ENCODE measurements at regions of chr19 and their contacts with region 1.

Region 1: DNA sequence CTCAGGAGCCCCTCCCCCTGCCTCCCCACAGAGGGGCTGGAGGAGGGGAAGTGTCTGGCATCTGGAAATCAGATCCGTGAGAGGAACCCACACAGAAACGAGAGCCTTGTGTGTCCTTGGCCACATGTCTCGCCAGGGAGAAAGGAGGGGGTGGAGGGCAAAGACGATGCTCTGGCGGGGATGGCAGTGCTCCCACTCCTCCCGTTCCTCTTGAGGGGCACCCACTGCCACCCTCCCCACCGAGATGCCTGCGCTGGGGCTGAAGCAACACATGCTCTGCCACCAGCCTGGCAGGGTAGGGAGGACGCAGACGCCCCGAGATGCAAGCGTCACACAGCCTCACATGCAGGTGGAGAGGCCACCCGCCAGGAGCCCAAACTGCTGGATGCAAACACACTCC is 2.8 kb downstream of the ADGRL1 start:
- DNase-seq: no peak
- H3K4me3 ChIP-seq: no peak overlapping the region
- H3K27ac ChIP-seq: no peak overlapping the region
- H3K4me1 ChIP-seq: peaks cover 4% of the 10 kb centered on the region
- H3K27me3 ChIP-seq: no peaks in the 10 kb centered on the region
- CTCF ChIP-seq: no peak
- POLR2A ChIP-seq: no peak

Region 2: GRCh38 chr19:14117668-14118164 is 85.5 kb before region 1 on chr19 and contains the start of gene PRKACA:
- intact Hi-C with region 1: no loop called
- DNase-seq: peak in 1 of 2 donors; percentile 100
- H3K4me3 ChIP-seq: peak within 1 kb of the TSS; percentile 95 to 99
- H3K27ac ChIP-seq: peak within 1 kb of the TSS; percentile 98
- H3K4me1 ChIP-seq: peaks cover 66% of the 10 kb centered on the region
- H3K27me3 ChIP-seq: no peaks in the 10 kb centered on the region
- CTCF ChIP-seq: no peak
- POLR2A ChIP-seq: peak in 1 of 2 donors; percentile 74
- total RNA-seq, gene PRKACA: 28.0 TPM

Region 3: GRCh38 chr19:14271840-14272239 is 68.7 kb after region 1 on chr19:
- intact Hi-C with region 1: no loop called
- DNase-seq: no peak
- H3K4me3 ChIP-seq: no peak overlapping the region
- H3K27ac ChIP-seq: no peak overlapping the region
- H3K4me1 ChIP-seq: no peaks in the 10 kb centered on the region
- H3K27me3 ChIP-seq: no peaks in the 10 kb centered on the region
- CTCF ChIP-seq: no peak
- POLR2A ChIP-seq: no peak

Region 4: GRCh38 chr19:14347999-14348889 is 145.1 kb after region 1 on chr19:
- intact Hi-C with region 1: loop called (anchors 5 kb)
- DNase-seq: no peak
- H3K4me3 ChIP-seq: peak overlapping the region; percentile 13 to 29
- H3K27ac ChIP-seq: no peak overlapping the region
- H3K4me1 ChIP-seq: no peaks in the 10 kb centered on the region
- H3K27me3 ChIP-seq: no peaks in the 10 kb centered on the region
- CTCF ChIP-seq: peak; percentile 80 to 95 (median 87)
- POLR2A ChIP-seq: no peak

Region 5: GRCh38 chr19:14419106-14419813 is 216.1 kb after region 1 on chr19 and contains the start of gene DDX39A:
- intact Hi-C with region 1: loop called (anchors 10 kb)
- DNase-seq: peak; percentile 98 to 100
- H3K4me3 ChIP-seq: peak within 1 kb of the TSS; percentile 71 to 79
- H3K27ac ChIP-seq: peak within 1 kb of the TSS; percentile 97
- H3K4me1 ChIP-seq: peaks cover 42% of the 10 kb centered on the region
- H3K27me3 ChIP-seq: no peaks in the 10 kb centered on the region
- CTCF ChIP-seq: no peak
- POLR2A ChIP-seq: peak in 1 of 2 donors; percentile 91
- total RNA-seq, gene DDX39A: 81.8 TPM